OCI-LY7 (cell line): ENCODE measurements at regions of chr22 and their contacts with region 1.

Region 1: DNA sequence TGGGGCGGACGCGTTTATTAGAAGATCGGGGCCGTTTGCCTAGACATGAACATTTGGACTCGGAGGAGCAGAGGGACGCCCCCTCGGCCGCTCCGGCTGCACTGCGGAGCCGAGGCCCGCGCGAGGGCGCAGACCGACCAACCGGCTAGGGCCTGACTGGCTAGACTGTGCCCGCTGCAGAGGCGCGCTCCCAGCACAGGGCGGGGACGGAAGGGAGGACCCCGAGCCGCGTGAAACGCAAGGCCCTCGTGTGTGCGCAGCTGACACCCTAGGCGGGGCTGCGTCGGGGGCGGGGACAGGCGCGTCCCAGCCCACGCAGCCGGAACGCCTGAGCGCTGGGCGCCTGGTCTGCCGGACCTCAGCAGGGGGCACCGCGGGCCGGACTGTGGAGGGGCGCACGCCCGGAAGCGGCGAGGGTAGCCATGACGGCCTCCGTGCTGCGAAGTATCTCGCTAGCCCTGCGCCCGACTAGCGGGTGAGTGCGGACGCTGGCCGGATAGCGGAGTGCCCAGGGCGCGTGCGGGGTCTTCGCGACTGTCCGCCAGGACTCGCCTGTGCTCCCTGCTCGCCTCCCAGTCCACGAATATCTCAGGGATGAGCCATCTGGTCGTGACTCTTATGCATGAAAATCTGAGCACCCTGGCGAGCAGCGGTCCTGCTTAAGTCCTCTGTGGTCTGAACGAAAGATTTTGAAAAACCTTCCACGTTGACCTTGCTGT is at the start of gene MRPL40:
- DNase-seq: peak; percentile 96
- H3K4me3 ChIP-seq: peak within 1 kb of the TSS; percentile 98
- H3K27ac ChIP-seq: peak within 1 kb of the TSS; percentile 94
- H3K4me1 ChIP-seq: peaks cover 49% of the 10 kb centered on the region
- CTCF ChIP-seq: no peak
- total RNA-seq, gene MRPL40: 38.5 and 46.3 TPM in 2 replicates

Region 2: GRCh38 chr22:19143967-19144400 is 288.3 kb before region 1 on chr22:
- CTCF ChIA-PET with region 1: no interaction called
- POLR2A ChIA-PET with region 1: no interaction called
- intact Hi-C with region 1: loop called (anchors 10 kb)
- DNase-seq: peak; percentile 17
- H3K4me3 ChIP-seq: peak overlapping the region; percentile 84
- H3K27ac ChIP-seq: no peak overlapping the region
- H3K4me1 ChIP-seq: peaks cover 9% of the 10 kb centered on the region
- CTCF ChIP-seq: no peak

Region 3: GRCh38 chr22:19304547-19304946 is 127.7 kb before region 1 on chr22:
- CTCF ChIA-PET with region 1: no interaction called
- POLR2A ChIA-PET with region 1: no interaction called
- intact Hi-C with region 1: loop called (anchors 5 kb)
- DNase-seq: no peak
- H3K4me3 ChIP-seq: no peak overlapping the region
- H3K27ac ChIP-seq: no peak overlapping the region
- H3K4me1 ChIP-seq: no peaks in the 10 kb centered on the region
- CTCF ChIP-seq: no peak

Region 4: DNA sequence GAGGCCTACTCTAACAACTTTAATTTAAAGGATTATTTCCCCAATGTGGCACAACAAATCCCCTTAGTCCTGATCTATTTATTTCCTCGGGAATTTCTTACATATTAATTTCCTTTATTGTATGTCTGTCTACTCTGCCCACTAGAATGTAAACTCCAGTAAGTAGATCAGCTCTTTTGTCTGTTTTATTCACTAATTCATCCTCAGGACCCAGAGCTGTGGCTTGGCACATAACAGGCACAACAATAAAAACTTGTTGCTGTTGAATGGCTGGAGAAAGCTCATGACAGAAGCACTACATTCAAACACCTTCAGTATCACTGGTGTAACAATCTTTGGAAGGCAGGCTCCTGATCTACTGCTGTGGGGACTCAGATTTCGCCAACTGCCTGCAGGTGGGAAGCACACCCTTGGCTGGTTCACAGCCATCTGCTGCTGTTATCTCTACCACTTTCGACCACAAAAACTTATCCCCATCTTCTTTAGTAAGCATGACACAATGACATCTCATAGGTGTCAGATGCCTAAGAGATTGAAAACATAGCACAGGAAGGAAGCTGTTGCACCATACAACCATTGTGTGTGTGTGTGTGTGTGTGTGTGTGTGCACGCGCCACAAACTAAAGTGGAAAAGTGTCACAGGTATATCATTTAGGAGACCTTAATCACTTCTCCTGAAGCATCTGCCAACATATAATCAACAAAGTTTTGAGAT is 12.7 kb before region 1 on chr22:
- CTCF ChIA-PET with region 1: no interaction called
- POLR2A ChIA-PET with region 1: interaction called, 3 read pairs
- intact Hi-C with region 1: loop called (anchors 1 kb)
- DNase-seq: peak; percentile 89
- H3K4me3 ChIP-seq: peak overlapping the region; percentile 43
- H3K27ac ChIP-seq: peak overlapping the region; percentile 96
- H3K4me1 ChIP-seq: peaks cover 61% of the 10 kb centered on the region
- CTCF ChIP-seq: no peak

Region 5: DNA sequence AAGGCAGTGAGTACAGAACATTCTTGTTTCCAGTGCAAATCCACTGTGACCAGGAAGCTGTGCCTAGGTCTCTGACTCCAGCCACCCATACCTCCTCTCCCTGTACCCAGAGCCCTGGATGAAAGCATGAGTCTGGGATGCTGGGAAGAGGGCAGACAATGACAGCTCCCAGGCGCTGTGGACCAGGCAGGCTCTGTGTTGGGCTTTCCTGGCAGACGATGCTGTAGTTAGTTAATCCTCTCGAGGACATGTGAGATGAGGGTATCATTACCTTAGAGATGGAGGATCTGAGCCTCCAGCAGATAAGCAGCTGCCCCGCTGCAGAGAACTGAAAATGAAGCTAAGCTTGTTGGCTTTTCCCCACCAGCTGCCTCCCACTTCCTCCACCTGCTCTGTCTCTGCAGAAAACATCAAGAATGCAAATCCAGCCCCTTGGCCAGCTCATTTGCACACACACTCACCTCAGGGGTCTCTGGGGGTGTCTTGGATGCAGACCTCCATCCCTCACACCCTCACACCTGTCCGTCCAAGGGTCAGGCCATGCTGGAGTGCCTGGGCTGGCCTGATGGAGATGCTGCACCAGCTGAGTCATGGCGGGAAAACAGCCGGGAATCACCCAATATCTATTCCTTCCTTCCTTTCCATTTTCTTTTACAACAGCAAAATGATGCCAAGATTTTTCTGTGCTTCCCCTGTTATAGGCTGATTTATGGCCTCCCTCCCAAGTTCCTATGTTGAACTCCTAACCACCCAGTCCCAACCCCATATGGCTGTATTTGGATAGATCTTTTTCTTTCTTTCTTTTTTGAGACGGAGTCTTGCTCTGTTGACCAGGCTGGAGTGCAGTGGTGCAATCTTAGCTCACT is 187.1 kb after region 1 on chr22:
- CTCF ChIA-PET with region 1: no interaction called
- POLR2A ChIA-PET with region 1: no interaction called
- intact Hi-C with region 1: loop called (anchors 2 kb)
- DNase-seq: peak; percentile 92
- H3K4me3 ChIP-seq: peak overlapping the region; percentile 24
- H3K27ac ChIP-seq: peak overlapping the region; percentile 76
- H3K4me1 ChIP-seq: peaks cover 68% of the 10 kb centered on the region
- CTCF ChIP-seq: no peak